PC-9 (cell line): ENCODE measurements at regions of chr17 and their contacts with region 1.

Region 1: GRCh38 chr17:68356520-68356919 is 65.2 kb downstream of the ARSG start:
- DNase-seq: no peak
- H3K4me3 ChIP-seq: no peak overlapping the region
- H3K27ac ChIP-seq: no peak overlapping the region
- H3K4me1 ChIP-seq: peaks cover 41% of the 10 kb centered on the region
- H3K27me3 ChIP-seq: no peaks in the 10 kb centered on the region
- CTCF ChIP-seq: no peak

Region 2: DNA sequence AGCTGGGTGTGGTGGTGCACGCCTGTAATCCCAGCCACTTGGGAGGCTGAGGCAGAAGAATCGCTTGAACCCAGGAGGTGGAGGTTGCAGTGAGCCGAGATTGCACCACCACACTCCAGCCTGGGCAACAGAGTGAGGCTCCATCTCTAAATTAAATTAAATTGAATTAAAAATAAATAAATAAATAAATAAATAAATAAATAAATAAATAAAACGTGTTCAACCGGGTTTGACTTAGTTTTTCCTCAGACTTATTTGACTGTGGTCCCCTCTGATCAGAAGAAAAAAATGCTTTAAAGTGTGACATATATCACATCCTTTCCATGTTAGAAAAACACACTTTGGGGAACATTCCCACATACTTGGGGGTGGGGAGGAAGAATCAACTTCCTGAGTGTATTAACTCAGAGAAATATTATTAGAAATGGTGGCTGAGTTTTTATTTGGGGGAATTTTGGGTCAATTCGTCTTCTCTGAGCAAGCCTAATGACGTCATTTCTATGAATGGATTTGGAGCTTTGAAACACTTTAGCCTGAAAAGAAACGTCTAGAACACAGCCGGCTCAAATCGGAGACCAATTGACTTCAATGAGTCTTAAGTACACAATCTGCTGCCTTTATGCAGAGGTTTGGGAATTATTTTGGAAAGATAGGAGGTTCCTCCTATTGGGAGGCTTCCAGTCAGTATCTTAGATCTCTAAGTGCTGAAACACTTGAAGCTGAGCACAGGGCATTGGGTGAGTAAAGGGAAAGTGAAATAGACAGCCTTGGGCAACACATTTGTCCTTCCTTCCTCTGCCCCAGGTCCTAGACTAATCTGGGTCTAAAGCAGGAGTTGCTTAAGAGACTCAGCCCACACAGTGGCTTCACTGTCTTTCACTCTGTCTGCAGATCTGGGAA is 846.9 kb before region 1 on chr17:
- CTCF ChIA-PET with region 1: no interaction called
- POLR2A ChIA-PET with region 1: no interaction called
- intact Hi-C with region 1: no loop called
- DNase-seq: no peak
- H3K4me3 ChIP-seq: no peak overlapping the region
- H3K27ac ChIP-seq: no peak overlapping the region
- H3K4me1 ChIP-seq: no peaks in the 10 kb centered on the region
- H3K27me3 ChIP-seq: no peaks in the 10 kb centered on the region
- CTCF ChIP-seq: no peak

Region 3: GRCh38 chr17:68172461-68172954 is 184.0 kb before region 1 on chr17:
- CTCF ChIA-PET with region 1: interaction called, 16 read pairs
- POLR2A ChIA-PET with region 1: no interaction called
- intact Hi-C with region 1: no loop called
- DNase-seq: peak; percentile 40 to 61
- H3K4me3 ChIP-seq: no peak overlapping the region
- H3K27ac ChIP-seq: no peak overlapping the region
- H3K4me1 ChIP-seq: no peaks in the 10 kb centered on the region
- H3K27me3 ChIP-seq: no peaks in the 10 kb centered on the region
- CTCF ChIP-seq: peak; percentile 98

Region 4: GRCh38 chr17:68291844-68292695 is 64.5 kb before region 1 on chr17:
- CTCF ChIA-PET with region 1: no interaction called
- POLR2A ChIA-PET with region 1: no interaction called
- intact Hi-C with region 1: loop called (anchors 10 kb)
- DNase-seq: peak; percentile 76 to 78
- H3K4me3 ChIP-seq: peak overlapping the region; percentile 76
- H3K27ac ChIP-seq: peak overlapping the region; percentile 58
- H3K4me1 ChIP-seq: peaks cover 20% of the 10 kb centered on the region
- H3K27me3 ChIP-seq: no peaks in the 10 kb centered on the region
- CTCF ChIP-seq: peak; percentile 33; the same call in 1 of the 2 replicates

Region 5: DNA sequence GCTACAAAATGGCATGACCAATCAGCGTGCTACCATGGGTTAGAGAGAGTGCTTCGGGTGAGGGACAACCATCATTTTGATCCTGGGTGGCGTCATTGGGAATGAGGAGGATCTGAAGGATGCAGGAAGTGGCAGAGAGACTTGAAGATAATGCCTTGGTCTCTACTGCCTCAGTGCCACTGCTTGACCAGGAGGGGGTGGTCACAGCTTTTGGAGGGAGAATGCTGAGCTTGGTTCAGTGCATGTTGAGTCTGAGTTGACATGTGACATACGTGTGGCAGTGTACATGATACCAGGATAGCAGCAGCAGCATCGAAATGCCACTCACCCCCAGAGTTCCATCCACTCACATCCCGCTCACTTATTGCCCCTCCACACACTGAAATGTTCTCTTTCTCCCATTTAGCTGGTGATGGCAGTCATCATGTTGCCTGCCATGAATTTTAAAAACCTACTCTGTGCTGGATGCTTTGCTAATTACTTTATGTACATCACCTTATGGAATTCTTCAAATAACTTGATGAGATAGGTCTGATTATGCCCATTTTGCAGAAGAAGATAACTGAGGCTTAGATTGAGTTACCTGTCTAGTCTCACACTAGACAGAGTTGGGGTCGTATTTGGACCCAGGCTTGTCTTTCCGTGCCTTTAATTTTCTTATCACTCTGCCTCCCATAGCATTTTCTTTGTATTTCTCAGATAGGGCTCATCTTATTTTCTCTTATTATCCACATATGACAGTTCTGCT is 28.5 kb before region 1 on chr17:
- CTCF ChIA-PET with region 1: no interaction called
- POLR2A ChIA-PET with region 1: interaction called, 4 read pairs
- intact Hi-C with region 1: loop called (anchors 2 kb)
- DNase-seq: no peak
- H3K4me3 ChIP-seq: no peak overlapping the region
- H3K27ac ChIP-seq: peak overlapping the region; percentile 92
- H3K4me1 ChIP-seq: peaks cover 47% of the 10 kb centered on the region
- H3K27me3 ChIP-seq: no peaks in the 10 kb centered on the region
- CTCF ChIP-seq: no peak

Region 6: DNA sequence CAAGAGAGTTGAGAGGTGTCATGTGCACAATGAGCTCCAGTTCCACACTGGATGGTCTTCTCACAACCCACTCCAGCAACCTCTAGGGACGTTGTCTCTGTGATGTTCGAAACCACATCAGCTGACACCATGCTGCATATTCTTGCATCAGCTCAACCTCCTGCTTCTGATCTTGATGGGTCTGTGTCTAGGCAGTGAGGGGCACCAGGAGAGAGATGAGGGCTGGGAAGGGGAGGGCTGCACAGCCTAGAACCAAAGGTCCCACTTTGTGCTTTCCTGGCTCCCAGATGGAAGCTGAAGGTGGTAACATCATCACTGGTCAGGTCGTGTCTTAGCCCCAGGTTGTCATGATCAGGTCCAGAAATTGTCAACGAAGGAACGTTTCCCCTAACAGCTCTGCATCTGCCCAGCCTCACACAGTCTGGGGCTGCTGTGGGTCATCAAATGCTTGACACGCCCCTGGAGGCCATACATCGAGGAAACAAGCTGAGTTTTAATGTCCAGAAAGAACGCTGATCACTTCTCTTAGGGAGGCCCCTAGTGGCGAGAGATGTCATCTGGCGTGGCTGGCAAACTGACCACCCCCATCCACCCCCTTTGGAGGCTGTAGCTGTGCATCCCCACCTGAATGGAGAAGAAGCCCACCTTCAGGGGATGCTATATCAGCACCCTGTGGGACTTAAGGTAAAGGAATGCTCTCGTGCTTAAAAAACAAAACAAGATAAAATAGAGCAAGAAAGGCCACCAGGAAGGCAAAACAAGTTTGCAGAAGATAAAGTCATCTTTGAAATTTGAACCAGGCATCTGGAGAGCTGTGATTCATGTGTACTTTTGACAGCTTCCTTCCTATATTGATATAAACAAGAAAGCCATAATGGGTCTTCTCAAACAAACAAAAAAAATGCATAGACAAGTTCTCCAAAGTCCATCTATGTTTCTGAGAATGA is 42.4 kb after region 1 on chr17:
- CTCF ChIA-PET with region 1: interaction called, 8 read pairs
- POLR2A ChIA-PET with region 1: interaction called, 24 read pairs
- intact Hi-C with region 1: no loop called
- DNase-seq: peak; percentile 68 to 73
- H3K4me3 ChIP-seq: no peak overlapping the region
- H3K27ac ChIP-seq: no peak overlapping the region
- H3K4me1 ChIP-seq: peaks cover 18% of the 10 kb centered on the region
- H3K27me3 ChIP-seq: no peaks in the 10 kb centered on the region
- CTCF ChIP-seq: peak; percentile 91

Region 7: DNA sequence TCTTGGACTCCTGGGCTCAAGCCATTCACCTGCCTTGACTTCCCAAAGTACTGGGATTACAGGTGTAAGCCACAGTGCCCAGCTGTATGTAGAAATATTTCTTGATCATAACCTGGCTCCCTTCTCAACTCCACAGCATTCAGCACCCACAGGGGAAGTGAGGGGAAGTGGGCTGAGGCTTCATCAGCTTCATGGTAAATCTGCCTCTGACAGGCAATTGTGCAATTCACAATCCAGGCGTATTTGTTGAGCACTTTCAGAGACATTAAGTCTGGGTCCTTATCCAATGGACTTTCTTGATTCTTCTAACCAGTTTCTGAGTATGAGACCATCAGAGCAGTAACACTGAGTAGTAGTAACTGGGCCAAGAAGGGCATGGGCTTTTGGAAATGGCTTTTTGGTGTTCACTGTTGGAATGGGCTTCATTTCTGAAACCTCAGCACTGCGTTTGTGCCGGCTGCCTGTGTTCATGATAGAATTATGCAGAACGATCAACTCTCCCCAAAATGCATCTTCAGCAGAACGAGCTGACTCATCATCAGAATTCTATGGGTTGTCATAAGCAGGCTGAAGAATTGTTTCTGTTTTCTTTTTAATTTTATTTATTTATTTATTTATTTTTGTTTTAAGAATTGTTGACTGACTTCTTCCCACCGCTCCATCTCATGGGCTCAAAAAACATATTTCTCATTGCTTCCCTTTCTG is 215.8 kb after region 1 on chr17:
- CTCF ChIA-PET with region 1: no interaction called
- POLR2A ChIA-PET with region 1: no interaction called
- intact Hi-C with region 1: no loop called
- DNase-seq: no peak
- H3K4me3 ChIP-seq: no peak overlapping the region
- H3K27ac ChIP-seq: no peak overlapping the region
- H3K4me1 ChIP-seq: no peaks in the 10 kb centered on the region
- H3K27me3 ChIP-seq: 0 out of 2 replicates have a peak, but pooled peaks cover 4% of the 10 kb centered on the region
- CTCF ChIP-seq: no peak